GM12878 (cell line): ENCODE measurements at regions of chr1 and their contacts with region 1.

Region 1: GRCh38 chr1:230222678-230223077 is 155.6 kb downstream of the GALNT2 start:
- DNase-seq: no peak
- ATAC-seq: peak; percentile 80
- H3K4me3 ChIP-seq: no peak overlapping the region
- H3K27ac ChIP-seq: no peak overlapping the region
- H3K4me1 ChIP-seq: no peaks in the 10 kb centered on the region
- H3K27me3 ChIP-seq: no peaks in the 10 kb centered on the region
- CTCF ChIP-seq: peak in 1 of 3 experiments; percentile 26; a peak in 1 of 6 replicates
- EP300 ChIP-seq: no peak
- POLR2A ChIP-seq: no peak
- RAD21 ChIP-seq: no peak

Region 2: DNA sequence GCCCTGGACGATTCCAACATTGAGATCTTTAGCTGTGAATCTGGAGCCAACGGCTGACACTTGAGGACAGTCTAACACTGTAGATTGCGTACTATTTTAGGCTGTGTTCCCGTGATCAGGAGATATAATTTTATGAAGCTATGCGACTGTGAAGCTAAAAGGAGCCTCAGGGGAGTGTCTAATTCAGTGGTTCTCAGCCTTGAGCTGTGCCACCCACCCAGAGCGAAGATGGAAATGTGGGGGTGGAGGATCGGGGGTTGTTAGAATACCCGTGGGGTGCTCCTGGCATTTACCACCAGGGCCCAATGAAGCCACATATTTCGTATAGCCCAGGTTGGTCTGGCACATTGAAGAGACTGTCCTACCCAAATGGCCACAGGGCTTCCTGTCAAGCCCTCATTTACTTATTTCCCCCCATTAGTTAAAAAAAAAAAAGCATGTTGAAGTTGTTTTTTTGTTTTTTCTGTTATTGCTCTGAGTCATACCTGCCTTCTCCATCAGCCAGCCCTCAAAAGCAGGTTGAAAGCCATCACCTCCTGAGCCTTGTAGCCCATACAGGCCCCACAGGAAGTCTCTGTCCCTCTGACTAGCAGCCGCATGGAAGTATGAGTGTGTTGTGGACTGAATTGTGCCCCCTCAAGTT is 13.9 kb before region 1 on chr1:
- CTCF ChIA-PET with region 1: interaction called, 11 read pairs
- POLR2A ChIA-PET with region 1: no interaction called
- RAD21 ChIA-PET with region 1: interaction called, 5 read pairs
- SMC1A ChIA-PET with region 1: interaction called, 16 read pairs
- in situ Hi-C with region 1: no loop called
- intact Hi-C with region 1: no loop called
- DNase-seq: no peak
- ATAC-seq: peak; percentile 66
- H3K4me3 ChIP-seq: no peak overlapping the region
- H3K27ac ChIP-seq: no peak overlapping the region; the same call in 1 of the 2 replicates
- H3K4me1 ChIP-seq: peaks cover 43% of the 10 kb centered on the region
- H3K27me3 ChIP-seq: no peaks in the 10 kb centered on the region
- CTCF ChIP-seq: peak in 2 of 3 experiments; percentile 3 to 13; a peak in 1 of 6 replicates
- EP300 ChIP-seq: no peak
- POLR2A ChIP-seq: no peak
- RAD21 ChIP-seq: no peak

Region 3: GRCh38 chr1:230277201-230278025 is 54.7 kb after region 1 on chr1:
- CTCF ChIA-PET with region 1: no interaction called
- POLR2A ChIA-PET with region 1: no interaction called
- RAD21 ChIA-PET with region 1: no interaction called
- SMC1A ChIA-PET with region 1: no interaction called
- in situ Hi-C with region 1: no loop called
- intact Hi-C with region 1: no loop called
- DNase-seq: no peak
- ATAC-seq: no peak
- H3K4me3 ChIP-seq: no peak overlapping the region
- H3K27ac ChIP-seq: no peak overlapping the region
- H3K4me1 ChIP-seq: peaks cover 4% of the 10 kb centered on the region; the same call in 1 of the 2 replicates
- H3K27me3 ChIP-seq: no peaks in the 10 kb centered on the region
- CTCF ChIP-seq: peak in 1 of 3 experiments; percentile 2; a peak in 1 of 6 replicates
- EP300 ChIP-seq: no peak
- POLR2A ChIP-seq: no peak
- RAD21 ChIP-seq: peak; percentile 48

Region 4: GRCh38 chr1:230335861-230336522 is 113.3 kb after region 1 on chr1:
- CTCF ChIA-PET with region 1: no interaction called
- POLR2A ChIA-PET with region 1: no interaction called
- RAD21 ChIA-PET with region 1: no interaction called
- SMC1A ChIA-PET with region 1: no interaction called
- in situ Hi-C with region 1: no loop called
- intact Hi-C with region 1: no loop called
- DNase-seq: no peak
- ATAC-seq: no peak
- H3K4me3 ChIP-seq: no peak overlapping the region
- H3K27ac ChIP-seq: no peak overlapping the region
- H3K4me1 ChIP-seq: no peaks in the 10 kb centered on the region
- H3K27me3 ChIP-seq: peaks cover 0 to 1% of the 10 kb centered on the region in 2 experiments; a peak in 2 of 4 replicates
- CTCF ChIP-seq: no peak
- EP300 ChIP-seq: no peak
- POLR2A ChIP-seq: no peak
- RAD21 ChIP-seq: no peak